ENCODE measurements at regions of chr2 and their contacts with region 1.

Region 1: DNA sequence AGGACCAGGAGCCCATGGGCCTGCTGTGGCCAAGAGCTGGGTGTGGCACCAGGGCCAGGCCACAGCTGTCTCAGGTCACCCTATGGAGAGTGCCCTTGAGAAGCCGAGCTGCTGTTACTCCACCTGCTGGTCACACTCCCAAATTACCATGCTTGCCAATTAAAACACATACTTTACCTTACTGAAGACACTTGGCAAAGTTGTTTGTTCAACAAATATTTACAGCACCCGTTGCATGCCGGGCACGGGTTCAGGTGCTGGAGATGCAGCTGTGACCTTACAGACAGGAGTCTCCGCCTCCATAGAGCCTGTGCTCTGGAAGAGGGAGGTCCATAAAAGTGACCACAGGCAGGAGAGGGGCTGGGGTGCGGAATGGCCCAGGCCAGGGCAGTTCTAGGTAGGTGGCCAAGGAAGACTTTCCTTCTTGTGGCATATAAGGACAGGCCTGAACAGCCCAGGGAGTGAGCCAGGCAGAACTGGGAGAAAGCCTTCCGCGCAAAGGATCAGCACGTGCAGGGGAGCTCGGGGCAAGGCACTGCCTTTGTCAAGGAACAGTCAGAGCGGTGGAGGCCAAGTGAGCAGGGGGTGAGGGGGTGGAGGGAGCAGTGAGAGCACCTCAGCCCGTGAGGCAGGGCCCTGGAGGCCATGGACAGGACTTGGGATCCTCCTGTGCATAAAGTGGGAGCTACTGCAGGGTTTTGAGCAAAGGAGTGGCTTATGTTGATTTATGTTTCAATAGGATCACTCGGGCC is 23.6 kb upstream of the RBM44 start:
- DNase-seq: peak; percentile 64
- ATAC-seq: peak; percentile 67
- H3K4me3 ChIP-seq: no peak overlapping the region
- H3K4me3 Mint-ChIP-seq: no peak overlapping the region
- H3K27ac ChIP-seq: no peak overlapping the region
- H3K27ac Mint-ChIP-seq: peak overlapping the region; percentile 41
- H3K4me1 ChIP-seq: no peaks in the 10 kb centered on the region
- H3K4me1 Mint-ChIP-seq: no peaks in the 10 kb centered on the region
- H3K27me3 ChIP-seq: no peaks in the 10 kb centered on the region
- H3K27me3 Mint-ChIP-seq: no peaks in the 10 kb centered on the region
- CTCF ChIP-seq: peak; percentile 75

Region 2: DNA sequence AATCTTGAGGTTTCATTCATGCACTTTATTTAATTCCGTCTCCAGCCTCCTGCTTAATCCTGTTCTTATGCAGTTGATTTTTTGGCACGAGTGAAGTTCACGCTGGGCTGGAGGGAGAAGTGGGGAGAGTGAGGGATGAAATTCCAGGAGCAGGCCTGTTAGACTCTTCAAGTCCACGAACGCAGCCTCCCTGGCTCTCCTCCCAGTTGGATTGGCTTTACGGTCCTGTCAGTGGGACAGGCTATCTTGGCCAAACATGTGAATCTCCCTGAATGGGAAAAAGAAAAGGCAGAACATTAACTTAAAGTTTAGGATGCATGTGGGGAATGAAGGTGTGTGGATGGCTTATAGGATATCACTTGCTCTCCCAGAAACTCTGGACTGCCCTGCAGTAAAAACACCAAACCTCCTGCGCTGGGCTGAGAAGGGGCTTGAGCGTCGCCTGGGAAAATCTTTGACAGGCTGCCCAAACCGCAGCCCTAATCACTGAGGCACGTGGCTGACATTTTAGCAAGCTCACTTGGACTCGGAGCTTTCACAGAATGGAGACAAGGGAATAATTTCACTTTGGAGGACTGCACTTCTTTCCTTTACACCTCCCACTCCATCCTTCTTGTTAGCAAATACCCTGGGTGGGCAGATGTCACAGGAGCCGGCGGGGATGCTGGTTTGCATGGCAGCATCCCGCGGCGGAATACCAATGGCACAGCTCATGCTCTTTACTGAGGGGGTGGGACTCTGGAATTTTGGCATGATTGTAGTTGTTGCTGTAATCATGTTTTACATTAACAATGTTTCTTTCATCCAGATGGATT is 1111.5 kb before region 1 on chr2:
- CTCF ChIA-PET with region 1: no interaction called
- POLR2A ChIA-PET with region 1: no interaction called
- intact Hi-C with region 1: no loop called
- DNase-seq: no peak
- ATAC-seq: no peak
- H3K4me3 ChIP-seq: no peak overlapping the region
- H3K4me3 Mint-ChIP-seq: no peak overlapping the region
- H3K27ac ChIP-seq: no peak overlapping the region
- H3K27ac Mint-ChIP-seq: no peak overlapping the region
- H3K4me1 ChIP-seq: no peaks in the 10 kb centered on the region
- H3K4me1 Mint-ChIP-seq: no peaks in the 10 kb centered on the region
- H3K27me3 ChIP-seq: peaks cover 0 to 9% (median 0%) of the 10 kb centered on the region in 4 experiments
- H3K27me3 Mint-ChIP-seq: peaks cover 46% of the 10 kb centered on the region
- CTCF ChIP-seq: no peak

Region 3: GRCh38 chr2:237581751-237582746 is 192.9 kb before region 1 on chr2:
- CTCF ChIA-PET with region 1: interaction called, 19 read pairs
- POLR2A ChIA-PET with region 1: interaction called, 5 read pairs
- intact Hi-C with region 1: no loop called
- DNase-seq: peak; percentile 61
- ATAC-seq: peak; percentile 68
- H3K4me3 ChIP-seq: no peak overlapping the region
- H3K4me3 Mint-ChIP-seq: no peak overlapping the region
- H3K27ac ChIP-seq: no peak overlapping the region
- H3K27ac Mint-ChIP-seq: no peak overlapping the region
- H3K4me1 ChIP-seq: peaks cover 0 to 4% of the 10 kb centered on the region in 2 donors
- H3K4me1 Mint-ChIP-seq: peaks cover 2% of the 10 kb centered on the region
- H3K27me3 ChIP-seq: peaks cover 0 to 7% (median 0%) of the 10 kb centered on the region in 4 experiments
- H3K27me3 Mint-ChIP-seq: peaks cover 2% of the 10 kb centered on the region
- CTCF ChIP-seq: peak; percentile 45